ENCODE measurements at regions of chr3 and their contacts with region 1.

Region 1: GRCh38 chr3:31039145-31039544 is 144.7 kb upstream of the GADL1 start:
- DNase-seq: no peak
- ATAC-seq: no peak
- H3K4me3 ChIP-seq: no peak overlapping the region
- H3K27ac ChIP-seq: no peak overlapping the region
- H3K4me1 ChIP-seq: no peaks in the 10 kb centered on the region
- H3K27me3 ChIP-seq: no peaks in the 10 kb centered on the region
- CTCF ChIP-seq: no peak

Region 2: DNA sequence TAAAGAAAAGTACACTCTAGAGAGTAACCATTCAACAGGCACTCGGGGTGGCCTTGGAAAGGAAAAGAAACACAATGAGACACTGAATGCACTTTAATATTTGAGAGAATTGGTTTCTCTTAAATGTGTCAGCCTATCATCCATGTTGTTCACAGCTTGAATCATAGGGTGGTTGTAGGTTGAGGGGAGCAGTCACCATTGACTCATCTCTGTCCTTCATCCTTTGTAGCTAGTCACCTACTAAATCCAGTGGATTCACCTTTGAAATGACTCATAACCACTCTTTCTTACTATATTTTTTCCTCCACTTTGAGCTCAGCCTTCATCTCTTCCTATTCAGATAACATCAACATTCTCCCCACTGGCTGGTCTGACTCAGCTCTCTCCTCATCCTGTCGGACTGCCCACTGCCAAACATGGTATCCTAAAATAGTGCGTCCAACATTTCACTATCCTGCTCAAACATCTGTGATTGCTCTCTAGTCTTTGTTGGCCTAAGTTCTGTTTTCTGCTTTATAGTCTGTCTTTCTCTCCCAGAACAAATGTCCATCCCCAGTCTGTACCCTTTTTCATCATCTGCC is 38.0 kb after region 1 on chr3:
- CTCF ChIA-PET with region 1: no interaction called
- POLR2A ChIA-PET with region 1: no interaction called
- in situ Hi-C with region 1: no loop called
- intact Hi-C with region 1: loop called (anchors 1 kb)
- DNase-seq: peak; percentile 15
- ATAC-seq: no peak
- H3K4me3 ChIP-seq: no peak overlapping the region
- H3K27ac ChIP-seq: no peak overlapping the region
- H3K4me1 ChIP-seq: no peaks in the 10 kb centered on the region
- H3K27me3 ChIP-seq: no peaks in the 10 kb centered on the region
- CTCF ChIP-seq: no peak

Measured in Panc1 (cell line).